ENCODE measurements at regions of chr2 and their contacts with region 1.

Region 1: GRCh38 chr2:7740114-7740513 is 822.9 kb downstream of the RNF144A start:
- DNase-seq: no peak
- ATAC-seq: no peak
- H3K4me3 ChIP-seq: no peak overlapping the region
- H3K4me3 Mint-ChIP-seq: no peak overlapping the region
- H3K27ac ChIP-seq: no peak overlapping the region
- H3K27ac Mint-ChIP-seq: peak overlapping the region in 1 of 2 donors; percentile 34
- H3K4me1 ChIP-seq: peaks cover 0 to 2% of the 10 kb centered on the region in 2 experiments
- H3K4me1 Mint-ChIP-seq: peaks cover 18 to 54% (median 48%) of the 10 kb centered on the region in 3 donors
- H3K27me3 ChIP-seq: no peaks in the 10 kb centered on the region
- H3K27me3 Mint-ChIP-seq: no peaks in the 10 kb centered on the region

Region 2: DNA sequence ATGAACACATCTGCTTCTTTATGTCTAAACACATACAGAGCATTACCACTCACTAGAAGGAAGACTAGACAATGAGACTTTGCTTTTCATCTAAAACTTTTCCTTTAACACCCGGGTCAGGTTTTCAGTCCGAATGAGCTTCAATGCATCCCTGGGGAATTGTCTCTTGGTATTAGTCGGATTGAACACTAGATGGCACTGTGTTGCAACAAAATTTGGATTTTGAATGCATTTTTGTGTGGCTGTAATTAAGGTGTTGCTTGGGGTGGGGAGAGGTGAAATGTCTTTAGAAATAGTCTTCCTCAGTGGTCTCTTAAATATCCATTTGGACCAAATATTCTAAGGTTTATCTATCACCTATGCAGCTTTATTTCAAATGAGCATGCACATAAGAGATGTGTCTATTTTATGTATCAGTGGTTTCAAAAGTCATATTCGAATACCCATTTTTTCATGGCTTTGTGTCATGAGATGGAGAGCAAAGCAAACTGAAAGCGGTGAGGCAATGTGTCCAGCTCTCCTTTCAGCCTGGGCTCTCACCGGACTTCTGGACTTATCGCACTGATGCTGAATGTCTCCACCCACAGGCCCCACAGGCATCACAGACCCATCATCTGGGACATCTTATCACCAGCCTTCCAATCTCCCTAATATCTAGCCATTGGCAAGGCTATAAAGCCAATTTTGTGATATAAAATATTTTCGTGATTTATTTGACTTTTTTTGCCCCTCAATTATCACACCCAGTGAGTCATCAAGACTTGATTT is 312.6 kb before region 1 on chr2:
- CTCF ChIA-PET with region 1: interaction called in 1 of 2 experiments, 10 read pairs
- POLR2A ChIA-PET with region 1: no interaction called
- DNase-seq: peak in 5 of 35 experiments; percentile 6 to 82 (median 40)
- ATAC-seq: peak; percentile 21 to 54 (median 38)
- H3K4me3 ChIP-seq: no peak overlapping the region
- H3K4me3 Mint-ChIP-seq: peak overlapping the region in 2 of 3 donors; percentile 0 to 4
- H3K27ac ChIP-seq: peak overlapping the region; percentile 10
- H3K27ac Mint-ChIP-seq: peak overlapping the region; percentile 41 to 67
- H3K4me1 ChIP-seq: peaks cover 29 to 47% of the 10 kb centered on the region in 2 experiments
- H3K4me1 Mint-ChIP-seq: peaks cover 38 to 41% (median 41%) of the 10 kb centered on the region in 3 donors
- H3K27me3 ChIP-seq: no peaks in the 10 kb centered on the region
- H3K27me3 Mint-ChIP-seq: peaks cover 5 to 6% of the 10 kb centered on the region in 2 donors